ENCODE measurements at regions of chr2 and their contacts with region 1.

Region 1: DNA sequence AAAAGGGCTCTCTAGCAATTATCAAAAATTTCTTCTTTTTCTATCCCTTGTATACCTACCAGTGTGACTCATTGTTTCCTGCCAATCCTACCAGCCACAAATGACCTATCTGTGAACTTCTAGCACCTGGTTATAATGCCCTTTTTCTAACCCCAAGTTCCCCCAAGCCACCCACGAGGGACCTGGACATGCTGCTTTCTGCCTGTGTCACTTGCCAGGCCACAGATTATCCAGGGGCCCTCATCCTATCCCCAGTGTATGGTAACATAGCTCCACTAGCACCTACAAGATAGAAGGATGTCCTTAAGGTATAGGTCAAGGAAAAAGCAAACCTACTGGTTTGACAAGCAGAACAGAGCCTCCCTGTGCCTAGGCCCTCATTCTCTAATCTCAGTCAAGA is 26.8 kb downstream of the AAK1 start:
- DNase-seq: peak in 5 of 9 experiments; percentile 23 to 58 (median 48)
- ATAC-seq: peak; percentile 44
- H3K4me3 ChIP-seq: no peak overlapping the region
- H3K4me3 Mint-ChIP-seq: peak overlapping the region; percentile 38
- H3K27ac ChIP-seq: peak overlapping the region in 1 of 2 experiments; percentile 26
- H3K27ac Mint-ChIP-seq: no peak overlapping the region
- H3K4me1 ChIP-seq: peaks cover 79% of the 10 kb centered on the region
- H3K4me1 Mint-ChIP-seq: peaks cover 42% of the 10 kb centered on the region
- H3K27me3 ChIP-seq: no peaks in the 10 kb centered on the region
- H3K27me3 Mint-ChIP-seq: no peaks in the 10 kb centered on the region
- CTCF ChIP-seq: no peak

Region 2: DNA sequence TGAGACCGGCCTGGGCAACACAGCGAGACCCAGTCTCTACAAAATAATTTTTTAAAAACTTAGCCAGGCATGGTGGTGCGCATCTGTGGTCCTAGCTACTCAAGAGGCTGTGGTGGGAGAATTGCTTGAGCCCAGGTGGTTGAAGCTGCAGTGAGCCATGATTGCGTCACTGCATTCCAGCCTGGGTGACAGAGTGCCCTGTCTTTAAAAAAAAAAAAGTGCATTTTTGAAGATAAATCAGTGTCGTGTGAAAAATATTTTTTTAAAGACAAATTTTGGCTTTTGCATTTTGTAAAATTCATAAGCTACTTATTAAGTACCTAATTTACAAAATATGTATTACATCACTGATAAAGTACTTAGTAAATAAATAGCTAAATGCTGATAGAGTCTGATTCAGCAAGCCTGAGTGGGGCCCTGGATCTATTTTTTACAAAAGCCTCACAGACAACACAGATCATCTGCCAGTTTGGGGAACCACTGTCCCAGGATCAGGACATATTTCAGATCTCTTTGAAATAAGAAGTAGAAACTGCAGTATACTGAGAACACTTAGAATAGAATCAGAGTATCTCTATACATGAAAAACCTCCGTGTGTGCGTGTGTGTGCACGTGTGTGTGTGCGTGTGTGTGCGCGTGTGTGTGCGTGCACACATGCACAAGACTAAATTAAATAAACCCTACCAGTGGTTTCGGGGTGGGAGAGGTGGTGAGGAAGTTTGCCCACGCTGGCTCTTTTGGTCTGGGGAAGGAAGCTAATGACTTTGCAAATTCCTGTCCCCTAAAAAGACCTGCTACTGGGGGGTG is 34.8 kb before region 1 on chr2:
- CTCF ChIA-PET with region 1: interaction called, 3 read pairs
- POLR2A ChIA-PET with region 1: interaction called, 4 read pairs
- intact Hi-C with region 1: loop called in 1 of 2 experiments (anchors 5 kb)
- DNase-seq: peak in 3 of 9 experiments; percentile 20 to 49 (median 47)
- ATAC-seq: no peak
- H3K4me3 ChIP-seq: no peak overlapping the region
- H3K4me3 Mint-ChIP-seq: peak overlapping the region; percentile 44
- H3K27ac ChIP-seq: peak overlapping the region in 1 of 2 experiments; percentile 4
- H3K27ac Mint-ChIP-seq: peak overlapping the region; percentile 82
- H3K4me1 ChIP-seq: peaks cover 95% of the 10 kb centered on the region
- H3K4me1 Mint-ChIP-seq: peaks cover 89% of the 10 kb centered on the region
- H3K27me3 ChIP-seq: no peaks in the 10 kb centered on the region
- H3K27me3 Mint-ChIP-seq: no peaks in the 10 kb centered on the region
- CTCF ChIP-seq: no peak

Region 3: GRCh38 chr2:69652221-69652651 is 35.5 kb after region 1 on chr2:
- CTCF ChIA-PET with region 1: interaction called, 3 read pairs
- POLR2A ChIA-PET with region 1: interaction called, 3 read pairs
- intact Hi-C with region 1: loop called in 1 of 2 experiments (anchors 5 kb)
- DNase-seq: no peak
- ATAC-seq: no peak
- H3K4me3 ChIP-seq: no peak overlapping the region
- H3K4me3 Mint-ChIP-seq: no peak overlapping the region
- H3K27ac ChIP-seq: no peak overlapping the region
- H3K27ac Mint-ChIP-seq: no peak overlapping the region
- H3K4me1 ChIP-seq: peaks cover 46% of the 10 kb centered on the region
- H3K4me1 Mint-ChIP-seq: peaks cover 59% of the 10 kb centered on the region
- H3K27me3 ChIP-seq: no peaks in the 10 kb centered on the region
- H3K27me3 Mint-ChIP-seq: no peaks in the 10 kb centered on the region
- CTCF ChIP-seq: no peak

Region 4: DNA sequence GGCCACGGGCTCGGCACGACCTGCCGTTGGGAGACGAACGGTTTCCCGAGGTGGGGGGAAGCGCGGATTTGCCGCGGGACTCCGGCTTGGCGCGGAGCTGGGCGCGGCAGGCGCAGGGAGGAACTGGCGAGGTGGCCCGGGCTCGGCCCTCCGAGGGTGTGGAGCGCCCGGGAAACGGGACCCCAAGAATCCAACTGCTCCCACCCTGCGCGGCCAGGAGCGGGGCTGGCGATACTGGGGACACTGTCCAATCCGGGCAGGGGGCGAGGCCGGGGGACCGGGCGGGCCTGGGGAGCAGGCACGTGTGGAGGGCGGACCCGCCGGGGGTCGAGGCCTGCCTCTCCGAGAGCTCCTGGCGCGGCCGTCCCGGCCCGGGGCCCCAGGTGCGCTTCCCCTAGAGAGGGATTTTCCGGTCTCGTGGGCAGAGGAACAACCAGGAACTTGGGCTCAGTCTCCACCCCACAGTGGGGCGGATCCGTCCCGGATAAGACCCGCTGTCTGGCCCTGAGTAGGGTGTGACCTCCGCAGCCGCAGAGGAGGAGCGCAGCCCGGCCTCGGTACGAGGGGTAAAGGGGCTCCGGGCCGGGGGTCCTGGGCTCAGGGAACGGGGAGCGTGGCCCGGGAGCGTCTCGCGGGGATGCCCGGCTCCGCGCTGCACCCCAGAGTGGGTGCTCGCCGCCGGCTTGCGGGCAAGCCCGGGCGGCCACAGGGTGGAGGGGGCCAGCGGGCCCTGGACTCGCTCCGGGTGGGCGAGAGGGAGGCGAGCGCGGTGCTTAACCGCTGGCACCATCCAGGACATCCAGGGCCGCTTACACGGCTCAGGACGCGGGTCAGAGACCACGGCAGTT is 125.1 kb after region 1 on chr2 and contains the start of gene ANXA4:
- CTCF ChIA-PET with region 1: no interaction called
- POLR2A ChIA-PET with region 1: no interaction called
- intact Hi-C with region 1: no loop called
- DNase-seq: peak; percentile 8 to 79 (median 55)
- ATAC-seq: peak; percentile 89
- H3K4me3 ChIP-seq: peak within 1 kb of the TSS; percentile 78 to 89
- H3K4me3 Mint-ChIP-seq: peak within 1 kb of the TSS; percentile 95
- H3K27ac ChIP-seq: peak within 1 kb of the TSS; percentile 21 to 49
- H3K27ac Mint-ChIP-seq: peak within 1 kb of the TSS; percentile 89
- H3K4me1 ChIP-seq: peaks cover 6% of the 10 kb centered on the region
- H3K4me1 Mint-ChIP-seq: peaks cover 14% of the 10 kb centered on the region
- H3K27me3 ChIP-seq: no peaks in the 10 kb centered on the region
- H3K27me3 Mint-ChIP-seq: no peaks in the 10 kb centered on the region
- CTCF ChIP-seq: no peak
- total RNA-seq, gene ANXA4: 2.9 TPM

Region 5: GRCh38 chr2:69848201-69848770 is 231.5 kb after region 1 on chr2:
- CTCF ChIA-PET with region 1: no interaction called
- POLR2A ChIA-PET with region 1: no interaction called
- intact Hi-C with region 1: no loop called
- DNase-seq: no peak
- ATAC-seq: no peak
- H3K4me3 ChIP-seq: no peak overlapping the region
- H3K4me3 Mint-ChIP-seq: no peak overlapping the region
- H3K27ac ChIP-seq: no peak overlapping the region
- H3K27ac Mint-ChIP-seq: peak overlapping the region; percentile 14
- H3K4me1 ChIP-seq: no peaks in the 10 kb centered on the region
- H3K4me1 Mint-ChIP-seq: no peaks in the 10 kb centered on the region
- H3K27me3 ChIP-seq: no peaks in the 10 kb centered on the region
- H3K27me3 Mint-ChIP-seq: no peaks in the 10 kb centered on the region
- CTCF ChIP-seq: no peak

Measured in CD8-positive, alpha-beta T cell (primary cell).